ENCODE measurements at regions of chr15 and their contacts with region 1.

Region 1: GRCh38 chr15:80695104-80695910 is at the start of gene ABHD17C:
- DNase-seq: peak; percentile 65
- H3K4me3 ChIP-seq: peak within 1 kb of the TSS; percentile 65 to 76
- H3K27ac ChIP-seq: peak within 1 kb of the TSS; percentile 88 to 91
- H3K4me1 ChIP-seq: no peaks in the 10 kb centered on the region
- H3K27me3 ChIP-seq: no peaks in the 10 kb centered on the region
- CTCF ChIP-seq: no peak
- POLR2A ChIP-seq: peak; percentile 78
- total RNA-seq, gene ABHD17C: 13.6 to 32.4 TPM

Region 2: DNA sequence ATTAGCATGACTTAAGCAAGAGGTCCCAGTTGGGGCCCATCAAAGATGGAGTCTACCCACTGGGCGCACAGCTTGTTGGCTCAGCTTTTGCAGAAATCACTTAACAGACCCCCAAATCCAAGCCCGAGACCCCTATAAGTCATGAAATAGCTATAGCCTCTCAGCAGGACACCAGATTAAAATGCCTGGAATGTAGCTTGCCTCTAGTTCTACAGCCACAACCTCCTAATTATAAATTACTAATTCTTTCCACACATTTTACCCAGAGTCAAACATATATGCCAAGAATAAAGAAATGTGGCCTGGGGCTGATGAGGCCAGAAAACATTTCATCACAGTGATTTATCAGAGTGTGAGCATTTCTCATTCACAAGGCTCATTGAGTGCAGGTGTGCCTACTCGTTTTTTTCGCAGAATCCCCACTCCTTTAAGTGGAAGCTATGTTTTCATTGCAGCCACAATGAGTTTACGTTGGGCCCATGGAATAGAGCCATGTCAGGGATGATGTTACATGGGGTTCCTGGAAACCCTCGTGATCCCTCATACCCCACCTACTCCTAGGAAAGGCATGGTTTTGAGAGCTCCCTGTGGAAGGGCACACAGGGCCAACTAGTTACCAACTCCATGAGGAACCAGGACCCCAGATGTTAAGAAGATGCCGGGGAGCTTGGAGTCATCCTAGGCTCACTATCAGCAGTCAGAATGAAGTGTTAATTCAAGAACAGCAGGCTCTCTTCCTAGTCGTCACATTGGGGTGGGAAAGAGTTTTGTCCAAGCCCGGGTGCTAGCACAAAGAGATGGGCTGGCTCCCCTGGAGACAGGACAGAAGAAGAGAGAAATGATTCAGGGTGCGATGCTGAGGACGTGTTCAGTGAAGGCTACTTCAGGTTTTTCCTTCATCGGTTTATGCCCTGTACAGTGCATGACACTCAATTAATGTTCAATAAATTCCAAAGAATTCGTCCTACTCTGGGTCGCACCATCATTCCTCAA is 90.4 kb before region 1 on chr15:
- intact Hi-C with region 1: no loop called
- DNase-seq: no peak
- H3K4me3 ChIP-seq: no peak overlapping the region
- H3K27ac ChIP-seq: no peak overlapping the region
- H3K4me1 ChIP-seq: no peaks in the 10 kb centered on the region
- H3K27me3 ChIP-seq: no peaks in the 10 kb centered on the region
- CTCF ChIP-seq: no peak
- POLR2A ChIP-seq: no peak

Region 3: DNA sequence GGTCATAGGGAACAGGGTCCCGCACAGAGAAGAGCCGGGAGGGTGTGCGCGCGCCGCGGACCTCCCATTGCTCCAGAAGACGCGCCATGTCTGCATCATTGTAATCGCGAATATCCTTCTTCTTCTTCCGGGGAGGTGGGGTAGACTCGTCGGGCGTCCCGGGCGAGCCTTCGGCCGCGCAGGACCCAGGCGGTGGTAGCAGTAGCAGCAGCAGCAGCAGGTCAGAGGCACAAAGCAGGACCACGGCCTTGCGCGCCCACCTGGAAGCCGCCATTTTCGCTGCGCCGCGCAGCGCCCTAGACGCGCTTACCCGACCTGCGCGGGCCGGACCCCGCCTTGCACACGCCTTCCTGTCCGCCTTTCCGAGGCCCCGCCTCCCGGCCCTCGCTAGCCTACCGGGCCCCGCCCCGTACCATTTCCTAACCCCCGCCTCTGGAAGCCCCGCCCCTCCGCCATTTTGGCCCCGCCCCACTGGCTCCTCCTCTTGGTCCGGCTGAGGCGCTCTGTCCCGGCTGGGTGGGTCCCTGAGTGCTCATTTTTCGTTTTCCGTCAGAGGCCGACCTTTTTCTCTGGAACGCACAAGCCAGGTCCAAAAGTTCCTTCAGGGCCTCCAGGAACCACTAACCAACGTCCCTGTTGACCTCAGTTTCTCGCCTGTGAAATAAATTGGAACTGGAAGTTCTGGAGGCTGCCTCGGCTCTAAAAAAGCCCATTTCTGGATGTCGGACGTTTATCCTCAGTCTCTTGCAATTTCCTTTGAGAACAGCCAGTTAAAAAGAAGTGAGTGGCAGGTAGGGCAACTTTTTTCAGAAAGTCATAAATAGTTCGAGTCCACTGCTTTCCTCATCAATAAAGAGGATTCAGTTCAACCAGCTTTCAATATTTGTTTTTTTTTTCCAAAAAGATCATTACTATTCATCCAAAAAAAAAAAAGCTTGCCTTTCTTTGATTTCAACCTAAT is 294.5 kb after region 1 on chr15 and contains the start of gene MESD:
- intact Hi-C with region 1: loop called (anchors 10 kb)
- DNase-seq: peak; percentile 97
- H3K4me3 ChIP-seq: peak within 1 kb of the TSS; percentile 72 to 89
- H3K27ac ChIP-seq: peak within 1 kb of the TSS; percentile 80 to 82
- H3K4me1 ChIP-seq: no peaks in the 10 kb centered on the region
- H3K27me3 ChIP-seq: no peaks in the 10 kb centered on the region
- CTCF ChIP-seq: peak in 1 of 4 experiments; percentile 3
- POLR2A ChIP-seq: peak; percentile 89
- total RNA-seq, gene MESD: 28.0 to 33.9 TPM

Region 4: DNA sequence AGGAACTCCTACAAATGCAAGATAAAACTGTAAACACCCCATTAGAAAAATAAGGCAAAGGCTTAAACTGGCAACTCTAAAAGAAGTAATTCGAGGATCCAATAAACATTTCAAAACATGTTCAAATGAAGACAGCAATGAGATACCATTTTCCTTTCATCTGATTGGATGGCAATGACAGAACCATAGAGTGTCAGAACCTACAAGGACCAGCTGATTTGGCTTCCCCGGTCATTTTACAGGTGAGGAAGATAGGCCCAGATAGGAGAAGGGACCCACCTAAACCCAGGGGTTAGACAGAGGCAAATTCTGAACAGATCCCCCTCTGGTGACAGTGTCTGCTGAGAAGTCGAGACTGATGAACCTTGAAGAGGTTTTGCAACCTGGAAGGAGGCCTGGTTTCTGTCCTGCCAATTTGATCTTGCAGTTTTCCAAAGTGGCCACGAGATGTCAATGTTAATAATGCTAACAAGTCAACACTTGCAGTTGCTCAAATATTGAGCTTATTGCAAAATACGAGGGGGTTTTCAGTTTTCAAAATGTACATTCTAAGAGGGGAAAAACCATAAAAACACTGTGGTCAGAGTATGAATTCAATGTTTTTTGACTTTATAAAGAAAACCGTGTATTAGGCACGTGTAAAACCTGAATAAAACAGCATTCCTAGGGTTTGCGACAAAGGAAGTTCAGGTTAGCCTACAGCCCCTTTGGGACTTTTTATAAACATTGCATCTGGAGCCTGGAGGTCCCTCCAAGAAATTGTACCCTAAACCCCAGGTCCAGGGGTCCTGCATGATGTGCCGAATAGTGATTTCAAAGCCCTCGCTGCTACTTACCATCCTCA is 460.3 kb after region 1 on chr15:
- intact Hi-C with region 1: no loop called
- DNase-seq: peak; percentile 46
- H3K4me3 ChIP-seq: no peak overlapping the region
- H3K27ac ChIP-seq: no peak overlapping the region
- H3K4me1 ChIP-seq: no peaks in the 10 kb centered on the region
- H3K27me3 ChIP-seq: no peaks in the 10 kb centered on the region
- CTCF ChIP-seq: peak in 3 of 4 experiments; percentile 30 to 52 (median 49)
- POLR2A ChIP-seq: no peak